OCI-LY7 (cell line): ENCODE measurements at regions of chr3 and their contacts with region 1.

Region 1: GRCh38 chr3:141386611-141387111 is 18.4 kb downstream of the ZBTB38 start:
- DNase-seq: peak; percentile 82
- H3K4me3 ChIP-seq: peak overlapping the region; percentile 71
- H3K27ac ChIP-seq: peak overlapping the region; percentile 84
- H3K4me1 ChIP-seq: peaks cover 38% of the 10 kb centered on the region
- CTCF ChIP-seq: no peak

Region 2: DNA sequence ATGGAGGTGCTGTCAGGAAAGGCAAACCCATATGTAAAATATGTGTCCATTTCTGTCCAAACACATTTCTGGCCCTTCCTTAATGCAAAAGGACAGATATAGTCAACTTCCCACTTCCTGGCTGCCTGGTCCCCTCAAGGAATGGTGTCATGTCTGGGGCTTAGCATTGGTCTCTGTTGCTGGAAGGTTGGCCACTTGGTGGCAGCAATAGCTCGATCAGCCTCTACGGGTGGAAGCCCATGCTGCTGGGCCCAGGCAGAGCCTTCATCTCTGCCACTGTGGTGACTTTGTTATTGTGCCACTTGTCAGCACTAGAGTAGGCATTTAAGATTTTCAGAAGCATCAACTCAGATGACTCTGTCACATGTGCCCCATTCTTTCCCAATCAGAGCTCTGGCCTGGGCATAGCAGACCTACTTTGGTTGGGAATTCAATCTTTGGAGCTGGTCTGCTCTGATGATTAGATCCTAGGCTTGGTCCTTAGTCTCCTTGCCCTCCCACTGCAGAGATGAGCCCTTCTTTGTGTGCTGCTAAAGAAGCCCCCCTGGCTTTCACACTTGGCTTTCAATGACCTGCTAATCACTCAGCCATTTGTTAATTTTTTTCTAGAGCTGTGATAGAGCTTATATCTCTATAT is 386.5 kb before region 1 on chr3:
- CTCF ChIA-PET with region 1: no interaction called
- POLR2A ChIA-PET with region 1: no interaction called
- intact Hi-C with region 1: no loop called
- DNase-seq: peak; percentile 39
- H3K4me3 ChIP-seq: no peak overlapping the region
- H3K27ac ChIP-seq: no peak overlapping the region
- H3K4me1 ChIP-seq: no peaks in the 10 kb centered on the region
- CTCF ChIP-seq: peak; percentile 77

Region 3: GRCh38 chr3:141311496-141312353 is 74.9 kb before region 1 on chr3:
- CTCF ChIA-PET with region 1: no interaction called
- POLR2A ChIA-PET with region 1: interaction called, 10 read pairs
- intact Hi-C with region 1: loop called (anchors 1 kb)
- DNase-seq: peak; percentile 98
- H3K4me3 ChIP-seq: peak overlapping the region; percentile 75
- H3K27ac ChIP-seq: no peak overlapping the region
- H3K4me1 ChIP-seq: peaks cover 9% of the 10 kb centered on the region
- CTCF ChIP-seq: peak; percentile 77

Region 4: GRCh38 chr3:141375381-141376301 is 11.0 kb before region 1 on chr3:
- CTCF ChIA-PET with region 1: interaction called, 9 read pairs
- POLR2A ChIA-PET with region 1: interaction called, 25 read pairs
- intact Hi-C with region 1: loop called (anchors 1 kb)
- DNase-seq: no peak
- H3K4me3 ChIP-seq: no peak overlapping the region
- H3K27ac ChIP-seq: no peak overlapping the region
- H3K4me1 ChIP-seq: peaks cover 29% of the 10 kb centered on the region
- CTCF ChIP-seq: no peak

Region 5: DNA sequence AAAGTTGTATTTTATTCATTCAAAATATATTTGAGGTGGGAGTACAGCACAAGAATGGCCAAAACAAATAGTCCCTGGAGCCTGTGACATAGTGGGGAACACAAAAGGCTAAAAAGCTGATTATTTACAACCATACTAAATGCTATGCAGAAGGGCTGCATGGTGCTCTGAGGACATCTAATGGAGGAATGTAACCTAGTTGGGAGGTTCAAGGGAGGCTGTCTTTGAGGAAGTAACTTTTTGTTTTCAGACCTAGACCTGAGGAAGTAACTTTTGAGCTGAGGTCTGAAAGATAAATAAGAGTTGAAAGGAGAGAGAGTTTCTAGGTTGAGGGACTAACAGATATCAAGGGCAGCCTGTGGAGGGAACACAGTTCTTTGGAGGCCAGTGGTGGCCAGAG is 65.4 kb after region 1 on chr3:
- CTCF ChIA-PET with region 1: interaction called, 4 read pairs
- POLR2A ChIA-PET with region 1: interaction called, 15 read pairs
- intact Hi-C with region 1: no loop called
- DNase-seq: peak; percentile 84
- H3K4me3 ChIP-seq: no peak overlapping the region
- H3K27ac ChIP-seq: no peak overlapping the region
- H3K4me1 ChIP-seq: peaks cover 8% of the 10 kb centered on the region
- CTCF ChIP-seq: peak; percentile 96

Region 6: DNA sequence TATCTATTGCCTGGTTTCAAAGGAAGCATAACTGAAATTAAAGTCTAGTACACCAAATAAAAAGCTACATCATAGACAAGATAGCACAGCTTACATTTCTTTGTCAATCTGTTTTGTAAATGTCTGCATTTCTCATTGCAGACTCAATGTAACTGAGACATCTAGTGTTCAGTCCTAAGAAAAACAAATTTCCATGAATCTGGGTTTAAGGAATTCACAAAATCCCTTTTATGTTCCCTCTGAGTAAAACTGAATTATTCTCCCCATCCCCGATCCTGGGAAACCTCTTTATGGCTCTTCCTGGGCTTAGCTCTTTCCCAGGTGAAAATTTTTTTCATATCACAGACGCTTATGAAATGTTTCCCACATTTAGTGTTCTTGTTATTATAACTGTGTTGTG is 78.6 kb after region 1 on chr3:
- CTCF ChIA-PET with region 1: no interaction called
- POLR2A ChIA-PET with region 1: no interaction called
- intact Hi-C with region 1: no loop called
- DNase-seq: no peak
- H3K4me3 ChIP-seq: no peak overlapping the region
- H3K27ac ChIP-seq: no peak overlapping the region
- H3K4me1 ChIP-seq: no peaks in the 10 kb centered on the region
- CTCF ChIP-seq: no peak

Region 7: DNA sequence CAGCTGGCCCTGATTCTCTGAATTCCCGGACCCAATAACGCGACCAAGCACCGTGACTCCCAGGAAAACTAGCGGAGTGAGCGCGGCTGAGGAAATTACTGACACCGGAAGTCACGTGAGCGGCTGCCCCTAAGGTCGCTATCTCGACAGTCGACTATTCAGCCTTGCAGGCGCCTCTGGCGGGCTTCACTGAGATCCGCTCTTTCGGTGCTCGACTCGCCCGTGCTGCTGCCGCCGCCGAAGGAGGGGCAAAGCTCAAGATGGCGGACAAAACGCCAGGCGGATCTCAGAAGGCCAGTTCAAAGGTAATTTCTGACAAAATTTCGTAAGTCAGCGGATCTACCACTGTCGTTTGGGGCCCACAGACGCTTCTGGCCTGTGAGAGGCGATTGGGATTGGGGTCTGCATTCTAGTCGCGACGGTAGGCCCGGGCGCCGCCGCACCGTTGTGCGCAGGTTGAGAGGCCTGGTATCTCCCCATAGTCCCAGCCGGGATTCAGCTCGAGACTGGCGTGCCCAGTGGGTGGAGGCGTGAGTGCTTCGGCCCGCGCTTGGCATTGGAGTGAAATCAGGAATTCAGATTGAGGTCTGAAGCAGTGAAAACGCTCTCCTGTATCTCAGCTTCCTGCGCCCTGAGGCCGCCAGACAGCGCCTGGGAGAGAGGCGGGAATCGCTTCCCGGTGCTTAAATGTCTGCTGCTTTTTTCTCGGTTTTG is 1614.9 kb after region 1 on chr3 and contains the start of gene U2SURP:
- CTCF ChIA-PET with region 1: interaction called, 14 read pairs
- POLR2A ChIA-PET with region 1: no interaction called
- intact Hi-C with region 1: no loop called
- DNase-seq: peak; percentile 96
- H3K4me3 ChIP-seq: peak within 1 kb of the TSS; percentile 100
- H3K27ac ChIP-seq: peak within 1 kb of the TSS; percentile 82
- H3K4me1 ChIP-seq: peaks cover 25% of the 10 kb centered on the region
- CTCF ChIP-seq: no peak
- total RNA-seq, gene U2SURP: 108 and 115 TPM in 2 replicates